ENCODE measurements at regions of chr15 and their contacts with region 1.

Region 1: GRCh38 chr15:43749690-43750345 is 3.6 kb downstream of the PDIA3 start:
- DNase-seq: peak in 11 of 14 experiments; percentile 5 to 89 (median 29)
- ATAC-seq: peak; percentile 56
- H3K4me3 ChIP-seq: peak overlapping the region; percentile 51
- H3K4me3 Mint-ChIP-seq: peak overlapping the region; percentile 86
- H3K27ac ChIP-seq: peak overlapping the region; percentile 23 to 53
- H3K27ac Mint-ChIP-seq: peak overlapping the region; percentile 90
- H3K4me1 ChIP-seq: peaks cover 53% of the 10 kb centered on the region
- H3K4me1 Mint-ChIP-seq: peaks cover 65% of the 10 kb centered on the region
- H3K27me3 ChIP-seq: no peaks in the 10 kb centered on the region
- H3K27me3 Mint-ChIP-seq: no peaks in the 10 kb centered on the region
- CTCF ChIP-seq: no peak

Region 2: GRCh38 chr15:43029476-43029875 is 720.3 kb before region 1 on chr15:
- CTCF ChIA-PET with region 1: no interaction called
- POLR2A ChIA-PET with region 1: no interaction called
- intact Hi-C with region 1: no loop called
- DNase-seq: no peak
- ATAC-seq: no peak
- H3K4me3 ChIP-seq: no peak overlapping the region
- H3K4me3 Mint-ChIP-seq: no peak overlapping the region
- H3K27ac ChIP-seq: no peak overlapping the region
- H3K27ac Mint-ChIP-seq: no peak overlapping the region
- H3K4me1 ChIP-seq: no peaks in the 10 kb centered on the region
- H3K4me1 Mint-ChIP-seq: no peaks in the 10 kb centered on the region
- H3K27me3 ChIP-seq: no peaks in the 10 kb centered on the region
- H3K27me3 Mint-ChIP-seq: no peaks in the 10 kb centered on the region
- CTCF ChIP-seq: no peak

Region 3: GRCh38 chr15:43723151-43723550 is 26.7 kb before region 1 on chr15:
- CTCF ChIA-PET with region 1: no interaction called
- POLR2A ChIA-PET with region 1: no interaction called
- intact Hi-C with region 1: no loop called
- DNase-seq: no peak
- ATAC-seq: no peak
- H3K4me3 ChIP-seq: no peak overlapping the region
- H3K4me3 Mint-ChIP-seq: no peak overlapping the region
- H3K27ac ChIP-seq: no peak overlapping the region
- H3K27ac Mint-ChIP-seq: no peak overlapping the region
- H3K4me1 ChIP-seq: no peaks in the 10 kb centered on the region
- H3K4me1 Mint-ChIP-seq: no peaks in the 10 kb centered on the region
- H3K27me3 ChIP-seq: no peaks in the 10 kb centered on the region
- H3K27me3 Mint-ChIP-seq: no peaks in the 10 kb centered on the region
- CTCF ChIP-seq: no peak

Region 4: DNA sequence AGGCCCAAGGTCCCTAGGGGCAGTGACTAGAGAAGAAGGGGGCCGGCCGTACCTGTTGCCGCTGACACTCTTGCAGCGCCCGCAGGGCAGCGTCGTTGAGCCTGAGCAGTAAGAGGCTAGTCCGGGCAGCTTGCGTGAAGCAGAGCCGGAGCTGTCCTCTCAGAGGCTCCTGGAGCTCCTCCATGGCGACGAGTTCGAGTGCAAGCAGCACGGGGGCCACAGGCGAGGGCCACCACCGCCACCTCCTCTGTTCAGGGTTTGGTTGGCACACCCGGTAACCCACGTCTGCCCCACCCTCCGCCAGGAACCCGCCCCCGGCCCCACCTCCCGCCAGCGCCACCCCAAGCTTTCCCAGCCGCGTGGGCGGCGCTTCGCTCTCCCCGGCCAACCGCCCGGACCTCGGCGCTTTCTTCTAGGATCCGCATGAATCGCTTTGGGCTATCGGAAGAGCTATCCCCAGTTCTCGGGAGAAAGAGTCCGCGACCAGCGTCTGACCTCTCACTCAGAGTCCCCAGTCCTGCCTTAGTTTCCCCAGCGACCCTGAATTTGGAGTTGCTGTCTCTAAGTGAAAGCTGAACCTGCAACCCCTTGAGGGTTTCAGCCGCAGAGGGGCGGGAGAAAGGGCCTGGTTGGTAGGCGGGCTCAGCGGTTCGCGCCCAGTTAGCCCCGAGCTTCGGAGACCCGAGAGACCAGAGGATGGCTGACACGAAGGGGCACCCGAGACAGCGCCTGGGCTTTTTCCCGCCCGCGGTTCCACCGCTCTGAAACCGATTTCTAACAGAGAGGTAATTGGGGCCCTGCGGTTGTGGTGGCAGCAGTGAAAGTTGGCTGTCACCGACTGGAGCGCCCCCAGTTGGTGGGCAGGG is 27.1 kb after region 1 on chr15 and contains the start of gene ELL3:
- CTCF ChIA-PET with region 1: interaction called, 6 read pairs
- POLR2A ChIA-PET with region 1: interaction called, 10 read pairs
- intact Hi-C with region 1: loop called (anchors 2 kb)
- DNase-seq: peak; percentile 67 to 94 (median 79)
- ATAC-seq: peak; percentile 79
- H3K4me3 ChIP-seq: peak within 1 kb of the TSS; percentile 79
- H3K4me3 Mint-ChIP-seq: peak within 1 kb of the TSS; percentile 94
- H3K27ac ChIP-seq: peak within 1 kb of the TSS; percentile 63 to 82
- H3K27ac Mint-ChIP-seq: peak within 1 kb of the TSS; percentile 94
- H3K4me1 ChIP-seq: peaks cover 25% of the 10 kb centered on the region
- H3K4me1 Mint-ChIP-seq: peaks cover 22% of the 10 kb centered on the region
- H3K27me3 ChIP-seq: no peaks in the 10 kb centered on the region
- H3K27me3 Mint-ChIP-seq: no peaks in the 10 kb centered on the region
- CTCF ChIP-seq: peak; percentile 77
- total RNA-seq, gene ELL3: 1.1 to 2.3 TPM

Region 5: GRCh38 chr15:43791993-43792760 is 42.4 kb after region 1 on chr15 and contains the start of gene SERF2:
- CTCF ChIA-PET with region 1: no interaction called
- POLR2A ChIA-PET with region 1: interaction called, 6 read pairs
- intact Hi-C with region 1: loop called in 1 of 2 experiments (anchors 1 kb)
- DNase-seq: peak; percentile 98 to 100 (median 99)
- ATAC-seq: peak; percentile 94
- H3K4me3 ChIP-seq: peak within 1 kb of the TSS; percentile 100
- H3K4me3 Mint-ChIP-seq: peak within 1 kb of the TSS; percentile 99
- H3K27ac ChIP-seq: peak within 1 kb of the TSS; percentile 98 to 99
- H3K27ac Mint-ChIP-seq: peak within 1 kb of the TSS; percentile 99
- H3K4me1 ChIP-seq: peaks cover 38% of the 10 kb centered on the region
- H3K4me1 Mint-ChIP-seq: peaks cover 58% of the 10 kb centered on the region
- H3K27me3 ChIP-seq: peaks cover 0 to 3% of the 10 kb centered on the region in 2 experiments
- H3K27me3 Mint-ChIP-seq: no peaks in the 10 kb centered on the region
- CTCF ChIP-seq: no peak
- total RNA-seq, gene SERF2: 319 to 323 TPM

Region 6: DNA sequence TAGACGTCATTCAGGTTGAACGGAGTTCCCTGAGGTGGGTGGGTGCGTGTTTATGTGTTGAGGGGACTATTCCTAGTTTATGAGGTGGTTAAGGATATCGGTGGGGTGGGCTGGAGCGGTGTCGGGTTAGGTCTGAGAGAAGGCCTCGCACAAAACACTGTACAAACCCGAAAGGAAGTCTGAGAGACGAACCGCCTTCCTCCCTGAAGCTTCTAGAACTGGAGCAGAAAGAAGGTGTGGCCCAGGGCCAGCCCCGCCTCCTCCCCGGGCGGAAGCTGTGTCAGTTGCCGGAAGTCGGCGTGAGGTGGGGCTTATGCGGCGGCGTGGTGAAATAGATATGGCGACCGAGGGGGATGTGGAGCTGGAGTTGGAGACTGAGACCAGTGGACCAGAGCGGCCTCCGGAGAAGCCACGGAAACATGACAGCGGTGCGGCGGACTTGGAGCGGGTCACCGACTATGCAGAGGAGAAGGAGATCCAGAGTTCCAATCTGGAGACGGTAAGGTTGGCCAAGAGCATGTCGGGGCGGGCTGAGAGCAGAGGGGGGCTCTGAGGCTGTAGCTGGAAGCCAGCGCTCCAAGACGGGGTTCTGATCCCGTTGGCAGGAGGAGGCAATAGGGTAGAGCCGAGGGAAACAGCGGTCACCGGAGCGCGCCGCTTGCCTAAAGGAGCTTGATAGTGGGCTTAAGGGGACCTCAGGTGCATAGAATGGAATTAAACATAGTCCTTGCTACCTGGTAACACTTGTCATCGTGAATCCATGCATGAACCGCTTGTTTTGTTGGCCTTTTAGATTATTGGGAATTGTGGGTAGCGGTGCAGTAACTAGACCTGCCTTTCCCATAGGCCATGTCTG is 50.7 kb after region 1 on chr15 and contains the start of gene HYPK:
- CTCF ChIA-PET with region 1: no interaction called
- POLR2A ChIA-PET with region 1: interaction called, 10 read pairs
- intact Hi-C with region 1: no loop called
- DNase-seq: peak; percentile 85 to 96 (median 92)
- ATAC-seq: peak; percentile 98
- H3K4me3 ChIP-seq: peak within 1 kb of the TSS; percentile 82
- H3K4me3 Mint-ChIP-seq: peak within 1 kb of the TSS; percentile 94
- H3K27ac ChIP-seq: peak within 1 kb of the TSS; percentile 79 to 92
- H3K27ac Mint-ChIP-seq: peak within 1 kb of the TSS; percentile 90
- H3K4me1 ChIP-seq: peaks cover 28% of the 10 kb centered on the region
- H3K4me1 Mint-ChIP-seq: peaks cover 59% of the 10 kb centered on the region
- H3K27me3 ChIP-seq: no peaks in the 10 kb centered on the region
- H3K27me3 Mint-ChIP-seq: no peaks in the 10 kb centered on the region
- CTCF ChIP-seq: no peak
- total RNA-seq, gene HYPK: 17.6 to 18.5 TPM

Region 7: GRCh38 chr15:43903864-43904290 is 154.1 kb after region 1 on chr15:
- CTCF ChIA-PET with region 1: no interaction called
- POLR2A ChIA-PET with region 1: no interaction called
- intact Hi-C with region 1: no loop called
- DNase-seq: peak; percentile 12 to 69 (median 28)
- ATAC-seq: peak; percentile 61
- H3K4me3 ChIP-seq: no peak overlapping the region
- H3K4me3 Mint-ChIP-seq: no peak overlapping the region
- H3K27ac ChIP-seq: no peak overlapping the region
- H3K27ac Mint-ChIP-seq: no peak overlapping the region
- H3K4me1 ChIP-seq: peaks cover 10% of the 10 kb centered on the region
- H3K4me1 Mint-ChIP-seq: peaks cover 4% of the 10 kb centered on the region
- H3K27me3 ChIP-seq: no peaks in the 10 kb centered on the region
- H3K27me3 Mint-ChIP-seq: no peaks in the 10 kb centered on the region
- CTCF ChIP-seq: peak; percentile 61

Region 8: GRCh38 chr15:44053458-44053857 is 303.6 kb after region 1 on chr15:
- CTCF ChIA-PET with region 1: no interaction called
- POLR2A ChIA-PET with region 1: no interaction called
- intact Hi-C with region 1: no loop called
- DNase-seq: no peak
- ATAC-seq: no peak
- H3K4me3 ChIP-seq: no peak overlapping the region
- H3K4me3 Mint-ChIP-seq: no peak overlapping the region
- H3K27ac ChIP-seq: no peak overlapping the region
- H3K27ac Mint-ChIP-seq: no peak overlapping the region
- H3K4me1 ChIP-seq: no peaks in the 10 kb centered on the region
- H3K4me1 Mint-ChIP-seq: no peaks in the 10 kb centered on the region
- H3K27me3 ChIP-seq: peaks cover 6 to 8% of the 10 kb centered on the region in 2 experiments
- H3K27me3 Mint-ChIP-seq: peaks cover 53% of the 10 kb centered on the region
- CTCF ChIP-seq: no peak

Measured in CD4-positive, alpha-beta T cell (primary cell).